ENCODE measurements at regions of chr16 and their contacts with region 1.

Region 1: GRCh38 chr16:50024684-50025536 is at the start of gene CNEP1R1:
- DNase-seq: peak; percentile 99
- CTCF ChIP-seq: peak; percentile 100

Region 2: DNA sequence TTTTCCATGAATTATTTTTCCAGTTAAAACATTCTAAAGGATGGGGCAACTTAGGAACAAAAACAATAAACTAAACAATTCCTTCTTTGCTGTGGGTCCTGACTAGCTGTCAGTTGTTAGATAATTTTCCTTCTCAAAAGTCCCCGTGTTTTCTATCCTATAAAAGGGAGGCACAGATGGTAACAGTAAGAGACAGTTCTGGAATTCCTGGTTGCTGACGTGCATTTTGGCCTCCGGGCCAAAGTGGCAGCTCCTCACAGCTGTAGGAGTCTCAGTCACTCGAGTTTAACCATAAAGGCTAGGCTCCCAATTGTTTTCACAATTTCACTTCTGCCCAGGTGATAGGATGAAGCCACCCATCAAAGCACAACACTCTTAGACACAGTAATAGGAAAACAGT is 92.0 kb before region 1 on chr16:
- CTCF ChIA-PET with region 1: no interaction called
- POLR2A ChIA-PET with region 1: no interaction called
- DNase-seq: no peak
- CTCF ChIP-seq: no peak

Region 3: DNA sequence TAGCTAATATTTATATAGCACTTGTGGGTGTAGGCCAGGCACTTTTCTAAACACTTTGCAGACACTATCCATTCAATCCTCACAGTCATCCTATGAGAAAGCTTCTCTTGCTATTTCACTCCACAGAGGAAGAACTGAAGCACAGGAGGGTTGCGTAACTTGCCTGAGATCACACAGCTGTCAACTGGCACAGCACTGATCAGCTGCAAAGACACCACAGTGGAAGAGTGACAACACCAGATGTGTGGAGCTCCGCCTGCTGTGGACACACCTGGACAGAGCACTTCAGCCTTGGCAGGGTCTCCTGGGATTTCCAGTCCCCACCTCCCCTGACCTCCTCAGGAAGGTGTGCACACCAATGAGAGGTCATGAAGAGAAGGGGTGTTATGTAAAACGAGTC is 13.2 kb before region 1 on chr16:
- CTCF ChIA-PET with region 1: interaction called, 21 read pairs
- POLR2A ChIA-PET with region 1: no interaction called
- DNase-seq: no peak
- CTCF ChIP-seq: no peak

Region 4: GRCh38 chr16:50102051-50102746 is 77.3 kb after region 1 on chr16:
- CTCF ChIA-PET with region 1: interaction called, 11 read pairs
- POLR2A ChIA-PET with region 1: no interaction called
- DNase-seq: peak; percentile 50
- CTCF ChIP-seq: no peak

Region 5: DNA sequence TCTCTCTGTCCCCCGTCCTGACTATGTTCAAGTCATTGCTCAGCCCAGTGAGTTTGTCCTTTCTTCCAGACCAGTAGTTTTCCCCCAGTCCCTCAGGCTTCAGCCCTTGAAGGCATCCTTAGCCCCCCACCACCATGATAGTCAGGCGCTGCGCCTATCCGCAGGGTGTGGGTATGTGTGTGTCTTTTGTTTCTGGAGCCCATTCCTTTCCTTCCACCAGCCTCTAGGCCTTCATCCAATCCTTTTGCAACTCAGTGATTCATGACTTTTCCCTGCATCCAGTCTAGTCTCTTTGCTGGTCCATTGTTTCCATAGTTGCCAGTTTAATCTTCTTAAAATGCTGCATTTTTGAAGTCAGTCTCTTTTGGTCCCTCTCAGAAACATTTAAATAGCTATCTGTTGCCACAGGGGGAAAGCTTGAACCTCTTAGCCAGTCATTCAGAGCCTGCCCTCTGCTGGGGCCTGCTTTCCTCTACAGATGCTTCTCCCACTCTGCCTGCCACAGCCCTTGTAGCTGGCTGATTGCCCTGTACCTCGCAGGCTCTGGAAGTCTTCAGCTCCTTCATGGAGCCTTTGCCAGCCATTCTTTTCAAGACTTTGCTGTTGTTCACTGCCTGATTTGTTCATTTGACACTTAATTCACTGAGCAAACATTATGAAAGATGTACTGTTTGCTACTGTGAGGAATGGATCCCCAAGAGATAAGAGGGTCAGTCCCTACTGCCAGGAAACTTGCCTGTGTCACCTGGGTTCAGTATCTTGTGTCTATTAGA is 185.5 kb after region 1 on chr16:
- CTCF ChIA-PET with region 1: interaction called, 177 read pairs
- POLR2A ChIA-PET with region 1: interaction called, 4 read pairs
- DNase-seq: peak; percentile 70
- CTCF ChIP-seq: peak; percentile 79

Region 6: GRCh38 chr16:50360033-50360778 is 335.3 kb after region 1 on chr16:
- CTCF ChIA-PET with region 1: interaction called, 31 read pairs
- POLR2A ChIA-PET with region 1: no interaction called
- DNase-seq: no peak
- CTCF ChIP-seq: no peak

Region 7: DNA sequence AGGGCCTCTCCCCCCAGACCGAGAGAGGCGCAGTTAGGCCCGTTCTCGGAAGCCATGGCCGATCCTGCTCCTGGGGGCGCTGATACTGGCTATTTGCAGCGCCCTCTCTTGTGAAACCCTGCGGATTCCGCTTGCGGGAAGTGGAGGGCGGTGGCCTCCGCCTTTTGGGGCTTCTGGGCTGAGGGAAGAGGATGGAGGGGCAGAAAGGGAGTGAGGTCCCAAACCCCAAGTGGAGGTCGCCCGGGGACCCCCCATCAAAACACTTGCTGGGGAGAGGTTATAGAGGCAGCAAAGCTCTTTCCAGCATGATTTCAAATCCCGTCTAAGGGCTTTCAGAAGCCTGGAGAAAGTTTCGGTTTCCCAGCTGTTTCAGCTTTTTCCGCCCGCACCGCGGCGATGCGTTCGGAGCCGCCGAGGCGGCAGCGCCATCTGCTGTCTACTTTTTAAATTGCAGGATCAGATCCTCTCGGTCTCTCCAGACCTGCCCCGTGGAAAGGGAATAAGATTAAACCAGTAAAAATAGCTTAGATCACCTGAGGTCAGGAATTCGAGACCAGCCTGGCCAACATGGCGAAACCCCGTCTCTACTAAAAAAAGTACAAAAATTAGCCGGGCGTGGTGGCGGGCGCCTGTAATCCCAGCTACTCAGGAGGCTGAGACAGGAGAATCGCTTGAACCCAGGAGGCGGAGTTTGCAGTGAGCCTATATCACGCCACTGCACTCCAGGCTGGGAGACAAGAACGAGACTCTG is 640.4 kb after region 1 on chr16:
- CTCF ChIA-PET with region 1: interaction called, 11 read pairs
- POLR2A ChIA-PET with region 1: no interaction called
- DNase-seq: peak; percentile 78
- CTCF ChIP-seq: peak; percentile 75

Measured in GM10248 (cell line).